ENCODE measurements at regions of chr9 and their contacts with region 1.

Region 1: DNA sequence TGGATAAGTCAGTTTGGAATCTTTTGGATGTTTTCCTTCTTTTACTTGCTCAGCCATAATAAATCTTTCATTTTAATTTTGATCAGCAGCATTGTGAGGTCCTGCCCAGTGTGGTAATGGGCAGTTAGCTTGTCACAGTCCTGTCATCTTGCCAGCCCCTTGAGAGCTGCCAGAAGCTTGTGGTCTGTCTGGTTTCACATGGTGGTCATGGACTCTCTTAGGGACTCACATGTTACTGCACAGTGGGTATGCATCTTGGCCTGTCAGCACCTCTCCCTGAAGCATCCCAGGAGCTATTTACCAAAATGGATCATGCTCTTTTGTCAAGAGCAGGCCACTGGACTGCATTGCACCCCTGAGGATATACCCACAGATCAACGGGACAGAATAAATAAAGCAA is 60.3 kb downstream of the DAPK1 start:
- DNase-seq: no peak
- H3K4me3 ChIP-seq: no peak overlapping the region
- H3K27ac ChIP-seq: no peak overlapping the region
- H3K4me1 ChIP-seq: no peaks in the 10 kb centered on the region
- H3K27me3 ChIP-seq: no peaks in the 10 kb centered on the region
- CTCF ChIP-seq: no peak

Region 2: DNA sequence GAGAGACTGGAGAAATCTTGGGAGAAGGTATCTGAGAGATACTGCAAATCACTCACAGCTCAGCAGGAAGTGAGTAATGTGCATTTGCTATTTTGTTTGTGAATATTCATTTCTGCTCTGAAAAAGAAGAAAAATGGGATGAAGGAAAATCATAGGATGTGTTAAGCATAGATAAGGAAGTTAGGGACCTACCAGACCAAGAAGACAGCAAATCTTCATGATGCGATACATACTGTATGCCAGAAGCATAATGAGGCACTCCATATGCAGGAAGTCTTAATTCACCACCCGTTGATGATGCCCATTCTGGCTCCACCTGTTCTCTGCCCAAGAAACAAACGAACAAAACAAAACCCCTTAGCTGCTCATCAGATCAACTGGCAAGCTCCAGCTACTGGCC is 66.5 kb before region 1 on chr9:
- CTCF ChIA-PET with region 1: no interaction called
- dilution Hi-C with region 1: loop called (anchors 5 kb)
- in situ Hi-C with region 1: no loop called
- intact Hi-C with region 1: no loop called
- DNase-seq: no peak
- H3K4me3 ChIP-seq: no peak overlapping the region
- H3K27ac ChIP-seq: no peak overlapping the region
- H3K4me1 ChIP-seq: peaks cover 5% of the 10 kb centered on the region
- H3K27me3 ChIP-seq: peaks cover 2% of the 10 kb centered on the region
- CTCF ChIP-seq: no peak

Region 3: DNA sequence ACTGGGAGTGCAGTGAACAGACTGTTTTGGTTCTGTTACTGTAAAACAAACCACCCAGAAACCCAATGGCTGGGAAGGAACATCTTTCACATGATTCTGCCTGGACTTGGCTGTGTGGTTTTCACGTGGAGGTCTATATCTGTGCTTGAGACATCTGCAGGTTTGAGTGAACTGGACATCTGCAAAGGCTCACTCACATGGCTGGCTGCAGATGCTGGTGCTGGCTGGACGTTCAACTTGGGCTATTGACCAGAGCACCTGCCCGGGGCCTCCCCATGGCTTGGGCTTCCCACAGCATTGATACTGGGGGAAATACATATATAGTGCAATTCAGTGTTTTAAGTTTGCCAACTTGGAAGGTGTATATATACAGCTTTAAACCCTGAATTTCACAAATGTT is 174.8 kb after region 1 on chr9:
- CTCF ChIA-PET with region 1: no interaction called
- dilution Hi-C with region 1: no loop called
- in situ Hi-C with region 1: no loop called
- intact Hi-C with region 1: no loop called
- DNase-seq: no peak
- H3K4me3 ChIP-seq: no peak overlapping the region
- H3K27ac ChIP-seq: no peak overlapping the region
- H3K4me1 ChIP-seq: no peaks in the 10 kb centered on the region
- H3K27me3 ChIP-seq: no peaks in the 10 kb centered on the region
- CTCF ChIP-seq: no peak

Measured in mammary epithelial cell (primary cell).